Prostate gland (tissue), 2 donors: ENCODE measurements at regions of chr17 and their contacts with region 1.

Region 1: DNA sequence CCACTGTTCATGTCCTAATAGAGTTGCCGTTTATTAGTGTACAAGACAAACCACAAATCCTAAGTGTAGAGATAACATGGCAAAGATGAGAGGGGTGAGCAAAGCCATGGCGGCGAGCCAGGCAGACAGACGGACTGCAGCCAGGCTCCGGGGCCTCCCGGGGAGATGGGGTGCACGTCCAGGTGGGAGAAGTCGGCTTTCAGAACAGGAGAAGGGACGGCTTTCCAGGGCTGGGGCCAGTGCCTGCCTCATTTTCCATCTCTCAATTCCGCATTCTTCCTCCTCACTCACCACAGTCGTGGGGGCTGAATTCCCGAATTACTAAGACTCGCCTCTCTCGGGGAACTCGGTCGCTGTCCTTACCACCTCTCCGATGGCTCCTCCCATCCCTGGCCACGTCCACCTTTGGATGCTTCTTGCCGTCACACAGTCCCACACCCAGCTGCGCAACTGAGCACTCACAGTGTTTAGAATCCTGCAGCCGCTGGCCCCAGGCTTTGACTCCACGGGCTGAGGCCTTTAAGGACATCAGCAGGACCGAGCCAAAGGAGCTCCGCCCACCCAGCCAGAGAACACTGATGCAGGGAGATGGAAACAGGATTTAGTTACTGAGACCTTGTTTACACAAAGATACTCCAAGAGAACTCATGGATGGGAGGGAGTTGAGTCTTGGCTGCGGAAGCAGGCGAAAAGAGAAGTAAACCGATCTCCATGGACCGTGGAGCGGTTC is 59.7 kb downstream of the RNF112 start:
- DNase-seq: peak; percentile 14
- H3K4me3 ChIP-seq: no peak overlapping the region
- H3K27ac ChIP-seq: peak overlapping the region; percentile 54 to 70
- H3K4me1 ChIP-seq: no peaks in the 10 kb centered on the region
- H3K27me3 ChIP-seq: no peaks in the 10 kb centered on the region
- CTCF ChIP-seq: no peak
- POLR2A ChIP-seq: no peak

Region 2: DNA sequence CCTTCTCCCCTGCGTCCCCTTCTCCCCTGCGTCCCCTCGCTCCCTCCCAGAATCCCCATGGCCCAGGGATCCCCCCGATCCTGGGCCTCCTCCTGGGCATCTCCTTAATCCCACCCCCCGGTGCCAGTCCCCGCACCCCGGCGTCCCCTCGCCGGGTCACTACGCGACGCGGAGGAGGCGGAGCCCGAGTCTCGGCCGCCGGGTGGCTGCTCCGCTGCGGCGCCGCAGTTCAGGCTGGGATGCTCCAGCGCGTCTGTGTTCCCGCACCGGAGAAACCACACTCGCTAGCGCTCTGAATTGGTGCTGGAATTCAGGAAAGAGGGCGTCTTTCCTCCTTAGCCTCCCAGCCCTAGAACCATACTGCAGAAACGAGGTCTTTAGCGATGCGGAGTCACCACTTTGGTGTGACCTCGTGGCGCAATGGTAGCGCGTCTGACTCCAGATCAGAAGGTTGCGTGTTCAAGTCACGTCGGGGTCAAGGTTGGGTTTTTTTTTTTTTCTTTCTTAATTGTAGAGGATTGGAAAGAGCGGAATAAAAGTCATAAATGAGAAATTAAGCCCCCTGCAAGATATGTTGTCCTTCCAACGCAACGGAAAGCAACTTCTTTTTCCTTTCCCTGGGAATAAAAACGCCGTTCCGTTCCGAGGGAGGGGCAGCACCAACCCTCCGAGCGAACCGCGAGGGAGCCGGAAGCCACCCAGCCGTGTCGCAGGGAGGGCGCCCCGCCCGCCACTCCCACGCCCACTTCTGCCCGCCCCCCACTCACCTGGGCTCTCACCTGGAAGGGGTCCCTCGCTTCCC is 37.3 kb after region 1 on chr17:
- intact Hi-C with region 1: loop called (anchors 5 kb)
- DNase-seq: peak; percentile 91
- H3K4me3 ChIP-seq: peak overlapping the region; percentile 63 to 75
- H3K27ac ChIP-seq: peak overlapping the region; percentile 89 to 94
- H3K4me1 ChIP-seq: no peaks in the 10 kb centered on the region
- H3K27me3 ChIP-seq: no peaks in the 10 kb centered on the region
- CTCF ChIP-seq: peak in 2 of 4 experiments; percentile 15 to 16
- POLR2A ChIP-seq: peak; percentile 17

Region 3: DNA sequence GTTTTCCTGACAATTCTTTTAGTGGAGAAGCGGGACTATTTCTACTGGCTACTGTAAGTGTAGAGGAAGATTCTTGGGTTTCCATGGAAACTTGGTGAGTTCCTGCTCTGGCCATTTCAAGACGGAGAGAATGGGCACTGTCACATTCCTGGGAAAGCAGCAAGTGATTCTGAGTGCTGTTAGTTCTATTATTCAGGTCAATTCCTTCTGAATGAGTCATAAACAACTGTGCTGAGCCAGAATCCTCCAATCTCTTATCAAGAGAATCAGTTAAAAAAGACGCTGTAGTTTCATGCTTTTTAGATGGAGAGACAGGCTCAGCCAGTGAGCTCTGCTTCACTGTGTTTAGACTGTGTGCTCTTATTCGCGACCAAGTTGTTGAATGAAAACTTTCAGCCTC is 487.3 kb after region 1 on chr17:
- intact Hi-C with region 1: no loop called
- DNase-seq: no peak
- H3K4me3 ChIP-seq: no peak overlapping the region
- H3K27ac ChIP-seq: no peak overlapping the region
- H3K4me1 ChIP-seq: no peaks in the 10 kb centered on the region
- H3K27me3 ChIP-seq: no peaks in the 10 kb centered on the region
- CTCF ChIP-seq: no peak
- POLR2A ChIP-seq: no peak